ENCODE measurements at regions of chr17 and their contacts with region 1.

Region 1: GRCh38 chr17:49887086-49888028 is 39.5 kb upstream of the TAC4 start:
- DNase-seq: peak; percentile 97 to 100
- H3K4me3 ChIP-seq: peak overlapping the region; percentile 29; the same call in 1 of the 2 replicates
- H3K27ac ChIP-seq: peak overlapping the region; percentile 88
- H3K4me1 ChIP-seq: peaks cover 67% of the 10 kb centered on the region
- H3K27me3 ChIP-seq: no peaks in the 10 kb centered on the region
- CTCF ChIP-seq: no peak

Region 2: GRCh38 chr17:49422714-49423113 is 464.6 kb before region 1 on chr17:
- CTCF ChIA-PET with region 1: no interaction called
- POLR2A ChIA-PET with region 1: no interaction called
- intact Hi-C with region 1: no loop called
- DNase-seq: no peak
- H3K4me3 ChIP-seq: no peak overlapping the region
- H3K27ac ChIP-seq: no peak overlapping the region
- H3K4me1 ChIP-seq: no peaks in the 10 kb centered on the region
- H3K27me3 ChIP-seq: peaks cover 38% of the 10 kb centered on the region; the same call in 1 of the 2 replicates
- CTCF ChIP-seq: no peak

Region 3: DNA sequence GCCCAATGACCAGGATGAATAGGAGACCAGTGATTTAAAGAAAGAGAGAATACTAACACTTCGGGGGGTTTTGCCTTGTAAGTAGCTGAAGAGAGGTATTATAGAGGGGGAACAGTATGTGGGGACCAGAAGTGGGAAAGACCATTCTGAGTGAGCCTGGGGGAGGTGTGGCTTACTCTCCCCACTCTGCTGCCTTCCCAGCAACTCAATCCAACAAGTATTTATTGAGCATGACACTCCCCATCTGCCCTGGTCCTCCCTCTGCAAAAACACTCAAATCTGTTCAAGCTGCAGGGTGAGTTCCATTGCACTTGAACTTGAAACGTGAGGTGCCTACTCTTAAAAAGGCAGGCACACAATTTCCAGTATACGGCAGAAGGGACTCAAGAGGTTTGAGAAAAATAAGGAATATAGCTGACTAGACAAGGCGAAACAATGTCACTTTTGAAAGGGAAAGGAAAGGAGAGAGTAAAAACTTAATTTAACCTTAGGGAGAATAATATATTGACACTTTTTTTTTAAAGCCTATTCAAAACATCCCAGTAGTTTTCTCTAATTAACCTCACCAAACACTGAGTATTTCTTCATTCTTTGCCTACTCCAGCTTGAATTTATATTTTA is 131.6 kb before region 1 on chr17:
- CTCF ChIA-PET with region 1: interaction called, 11 read pairs
- POLR2A ChIA-PET with region 1: no interaction called
- intact Hi-C with region 1: no loop called
- DNase-seq: no peak
- H3K4me3 ChIP-seq: no peak overlapping the region
- H3K27ac ChIP-seq: no peak overlapping the region
- H3K4me1 ChIP-seq: no peaks in the 10 kb centered on the region
- H3K27me3 ChIP-seq: no peaks in the 10 kb centered on the region
- CTCF ChIP-seq: no peak

Region 4: DNA sequence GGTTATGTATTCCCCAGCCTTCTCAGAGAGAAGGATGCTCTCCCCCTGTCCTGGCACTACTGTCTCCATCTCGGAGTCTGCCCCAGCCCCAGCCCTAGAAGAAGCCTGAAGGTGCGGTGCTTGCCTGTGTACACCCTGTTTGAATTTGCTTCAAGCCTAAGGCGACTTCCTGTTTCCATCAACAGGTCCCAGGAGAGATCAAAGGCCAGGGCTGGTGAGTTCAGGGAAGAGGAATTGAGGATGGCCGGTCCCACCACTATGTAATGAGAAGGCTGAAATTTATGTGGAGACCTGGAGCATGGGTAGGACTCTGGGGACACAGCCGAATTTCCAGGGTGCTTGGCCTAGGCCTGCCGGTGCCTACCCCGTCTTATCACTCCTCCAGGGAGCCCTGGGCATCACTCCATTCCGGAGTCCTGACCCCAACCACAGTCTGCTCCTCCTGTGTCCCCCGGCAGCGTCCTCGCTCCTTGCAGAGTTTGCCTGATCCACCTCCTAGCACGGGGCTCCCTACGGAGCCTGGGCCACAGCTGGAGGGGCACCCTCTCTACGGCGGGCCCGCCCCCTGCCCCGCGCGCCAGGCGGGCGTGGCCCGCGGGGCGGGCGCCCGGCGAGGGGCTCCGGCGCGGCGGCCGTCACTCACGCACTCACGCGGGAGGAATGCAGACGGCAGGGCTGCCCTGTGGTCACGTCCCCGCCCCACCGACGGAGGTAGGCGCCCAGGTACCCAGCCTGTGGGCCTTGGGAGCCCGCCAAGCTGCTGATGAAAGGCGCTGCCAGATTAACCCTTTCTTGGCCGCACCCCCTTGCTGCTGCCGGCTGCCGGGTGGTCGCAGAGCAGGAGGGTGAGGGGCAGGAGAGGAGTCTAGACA is 14.3 kb after region 1 on chr17:
- CTCF ChIA-PET with region 1: interaction called, 4 read pairs
- POLR2A ChIA-PET with region 1: interaction called, 4 read pairs
- intact Hi-C with region 1: loop called (anchors 1 kb)
- DNase-seq: peak; percentile 66 to 75
- H3K4me3 ChIP-seq: peak overlapping the region; percentile 39; the same call in 1 of the 2 replicates
- H3K27ac ChIP-seq: peak overlapping the region; percentile 59
- H3K4me1 ChIP-seq: peaks cover 85% of the 10 kb centered on the region
- H3K27me3 ChIP-seq: no peaks in the 10 kb centered on the region
- CTCF ChIP-seq: no peak

Region 5: DNA sequence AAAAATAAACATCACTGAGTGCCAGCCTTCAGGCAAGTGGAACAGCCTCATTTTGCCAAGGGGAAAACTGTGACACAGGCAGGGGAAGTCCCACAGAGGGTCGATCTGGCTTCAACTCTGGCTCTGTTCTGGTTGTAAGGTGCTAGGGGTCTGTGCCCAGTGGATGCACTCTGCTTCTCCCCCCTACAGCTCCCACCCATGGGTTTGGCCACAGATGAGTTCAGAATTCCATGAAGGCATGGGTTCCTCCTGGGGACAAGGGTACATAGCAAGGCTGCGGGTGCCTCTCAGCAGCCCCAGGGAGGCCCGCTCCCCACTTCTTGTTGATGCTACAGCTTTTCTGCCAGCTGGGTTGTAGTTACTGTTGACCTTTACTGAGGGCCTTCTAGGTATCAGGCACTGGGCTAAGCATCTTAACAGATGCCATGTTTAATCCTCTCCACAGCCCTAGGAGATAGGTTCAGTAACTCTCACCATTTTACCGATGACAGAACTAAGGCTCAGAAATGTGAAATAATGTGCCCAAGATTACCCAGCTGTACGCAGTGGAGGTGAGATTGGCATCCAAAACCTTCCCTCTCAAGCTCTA is 27.2 kb after region 1 on chr17:
- CTCF ChIA-PET with region 1: interaction called, 11 read pairs
- POLR2A ChIA-PET with region 1: no interaction called
- intact Hi-C with region 1: no loop called
- DNase-seq: no peak
- H3K4me3 ChIP-seq: no peak overlapping the region
- H3K27ac ChIP-seq: no peak overlapping the region
- H3K4me1 ChIP-seq: peaks cover 48% of the 10 kb centered on the region
- H3K27me3 ChIP-seq: no peaks in the 10 kb centered on the region
- CTCF ChIP-seq: no peak

Region 6: DNA sequence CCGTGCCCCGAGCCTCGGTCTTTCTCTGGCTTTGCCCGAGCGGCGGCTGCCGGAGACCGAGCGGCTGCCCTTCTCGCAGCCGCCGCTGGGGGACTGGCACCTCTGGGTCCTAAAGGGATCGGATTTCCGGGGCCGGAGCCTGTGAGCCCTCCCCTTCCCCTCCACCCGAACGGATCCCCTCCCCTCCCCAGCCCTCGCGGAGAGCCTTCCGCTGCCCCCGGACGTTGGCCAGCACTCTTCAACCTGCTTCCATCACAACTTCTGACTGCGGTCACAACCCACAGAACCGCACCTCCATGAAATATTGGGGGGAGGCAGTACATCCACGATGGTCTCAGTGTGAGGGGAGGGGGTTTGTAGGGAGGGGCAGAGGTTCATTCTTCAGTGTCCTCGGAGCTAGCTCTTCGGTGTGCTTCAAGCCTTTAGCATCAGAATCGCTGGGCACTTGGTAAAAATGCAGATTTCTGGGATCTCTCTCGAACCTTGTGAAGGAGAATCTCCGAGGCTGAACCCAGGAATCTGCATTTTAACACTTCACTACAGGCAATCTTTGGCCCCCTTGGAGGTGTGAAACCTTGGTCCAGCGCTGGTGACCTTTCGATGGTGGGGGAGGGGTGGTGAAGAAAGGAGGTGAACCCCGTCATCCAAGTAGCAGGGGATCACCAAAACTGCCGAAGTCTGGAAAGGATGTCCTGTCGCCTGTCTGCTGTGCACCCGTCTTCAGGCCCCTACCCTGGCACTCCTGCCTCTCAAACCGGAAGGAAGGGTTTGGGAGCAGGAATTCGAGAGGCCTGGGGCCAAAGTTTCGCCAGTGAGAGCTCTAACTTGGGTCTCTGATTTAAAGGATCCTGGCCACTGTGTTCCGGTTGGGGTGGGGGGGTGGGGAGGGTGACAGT is 263.9 kb after region 1 on chr17:
- CTCF ChIA-PET with region 1: no interaction called
- POLR2A ChIA-PET with region 1: interaction called, 16 read pairs
- intact Hi-C with region 1: loop called (anchors 5 kb)
- DNase-seq: peak; percentile 85
- H3K4me3 ChIP-seq: peak overlapping the region; percentile 70
- H3K27ac ChIP-seq: peak overlapping the region; percentile 86
- H3K4me1 ChIP-seq: peaks cover 70% of the 10 kb centered on the region
- H3K27me3 ChIP-seq: no peaks in the 10 kb centered on the region
- CTCF ChIP-seq: peak; percentile 69

Measured in PC-9 (cell line).